AG04449 (cell line): ENCODE measurements at regions of chr2 and their contacts with region 1.

Region 1: GRCh38 chr2:238362626-238363025 is 42.3 kb downstream of the TRAF3IP1 start:
- DNase-seq: no peak
- H3K4me3 ChIP-seq: no peak overlapping the region
- CTCF ChIP-seq: no peak

Region 2: DNA sequence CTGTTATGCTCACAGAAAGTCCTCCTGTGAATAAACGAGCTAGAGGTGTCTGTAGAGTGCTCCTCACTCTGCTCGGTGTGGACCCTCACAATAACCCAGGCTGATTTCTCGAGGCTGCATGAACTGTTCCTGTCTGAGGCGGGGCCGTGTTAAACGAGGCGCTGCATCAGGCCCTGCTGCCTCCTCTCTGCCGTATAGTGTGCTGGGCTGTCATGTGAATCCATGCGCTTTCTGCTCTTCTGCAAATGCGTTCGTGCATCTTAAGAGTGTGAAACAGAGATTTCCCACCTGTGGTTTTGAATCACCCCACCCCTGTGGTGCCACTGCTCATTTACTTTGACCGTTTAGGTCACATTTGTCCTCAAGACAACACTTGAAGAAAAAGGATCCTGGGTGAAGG is 16.1 kb before region 1 on chr2:
- CTCF ChIA-PET with region 1: interaction called, 21 read pairs
- POLR2A ChIA-PET with region 1: no interaction called
- DNase-seq: no peak
- H3K4me3 ChIP-seq: no peak overlapping the region
- CTCF ChIP-seq: no peak

Region 3: GRCh38 chr2:238847841-238848690 is 485.4 kb after region 1 on chr2 and contains the start of gene TWIST2:
- CTCF ChIA-PET with region 1: no interaction called
- POLR2A ChIA-PET with region 1: no interaction called
- DNase-seq: peak; percentile 85
- H3K4me3 ChIP-seq: peak within 1 kb of the TSS; percentile 89
- CTCF ChIP-seq: peak; percentile 26

Region 4: GRCh38 chr2:238895891-238896600 is 533.4 kb after region 1 on chr2:
- CTCF ChIA-PET with region 1: no interaction called
- POLR2A ChIA-PET with region 1: no interaction called
- DNase-seq: peak; percentile 62
- H3K4me3 ChIP-seq: no peak overlapping the region
- CTCF ChIP-seq: no peak